B cell (primary cell): ENCODE measurements at regions of chr9 and their contacts with region 1.

Region 1: GRCh38 chr9:125843646-125844045 is 96.5 kb downstream of the PBX3 start:
- DNase-seq: no peak
- ATAC-seq: no peak
- H3K4me3 ChIP-seq: no peak overlapping the region
- H3K4me3 Mint-ChIP-seq: no peak overlapping the region
- H3K27ac ChIP-seq: no peak overlapping the region
- H3K27ac Mint-ChIP-seq: no peak overlapping the region
- H3K4me1 ChIP-seq: peaks cover 28 to 36% of the 10 kb centered on the region in 2 donors
- H3K4me1 Mint-ChIP-seq: peaks cover 53% of the 10 kb centered on the region
- H3K27me3 ChIP-seq: no peaks in the 10 kb centered on the region
- H3K27me3 Mint-ChIP-seq: no peaks in the 10 kb centered on the region
- CTCF ChIP-seq: no peak

Region 2: DNA sequence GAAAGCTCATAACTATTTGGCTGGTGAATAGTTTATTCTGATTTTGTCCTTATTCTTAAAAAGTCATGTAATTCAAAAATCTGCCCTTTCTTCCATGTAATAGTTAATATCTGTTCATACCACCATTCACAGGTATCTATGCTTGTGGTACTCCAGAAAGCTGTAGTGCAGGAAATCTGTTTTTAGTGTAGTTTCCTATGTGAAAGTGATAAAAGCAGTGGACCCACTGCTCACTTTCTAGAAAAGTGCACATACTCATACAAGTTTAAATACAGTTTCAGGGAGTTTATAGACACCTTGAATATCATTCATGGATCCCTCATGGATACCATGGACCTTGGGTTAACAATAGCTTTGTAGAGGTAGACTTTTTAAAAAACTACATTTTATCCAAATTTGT is 76.3 kb before region 1 on chr9:
- CTCF ChIA-PET with region 1: no interaction called
- POLR2A ChIA-PET with region 1: no interaction called
- intact Hi-C with region 1: loop called (anchors 5 kb)
- DNase-seq: no peak
- ATAC-seq: no peak
- H3K4me3 ChIP-seq: no peak overlapping the region
- H3K4me3 Mint-ChIP-seq: no peak overlapping the region
- H3K27ac ChIP-seq: peak overlapping the region in 1 of 2 donors; percentile 9
- H3K27ac Mint-ChIP-seq: no peak overlapping the region
- H3K4me1 ChIP-seq: peaks cover 10 to 12% of the 10 kb centered on the region in 2 donors
- H3K4me1 Mint-ChIP-seq: peaks cover 24% of the 10 kb centered on the region
- H3K27me3 ChIP-seq: no peaks in the 10 kb centered on the region
- H3K27me3 Mint-ChIP-seq: no peaks in the 10 kb centered on the region
- CTCF ChIP-seq: no peak

Region 3: GRCh38 chr9:125829743-125830142 is 13.9 kb before region 1 on chr9:
- CTCF ChIA-PET with region 1: interaction called, 5 read pairs
- POLR2A ChIA-PET with region 1: interaction called, 3 read pairs
- intact Hi-C with region 1: loop called (anchors 2 kb)
- DNase-seq: peak; percentile 79
- ATAC-seq: peak; percentile 94
- H3K4me3 ChIP-seq: peak overlapping the region; percentile 9 to 70 (median 55)
- H3K4me3 Mint-ChIP-seq: peak overlapping the region; percentile 92
- H3K27ac ChIP-seq: peak overlapping the region; percentile 5 to 86
- H3K27ac Mint-ChIP-seq: peak overlapping the region; percentile 94
- H3K4me1 ChIP-seq: peaks cover 2 to 12% of the 10 kb centered on the region in 2 donors
- H3K4me1 Mint-ChIP-seq: peaks cover 28% of the 10 kb centered on the region
- H3K27me3 ChIP-seq: no peaks in the 10 kb centered on the region
- H3K27me3 Mint-ChIP-seq: no peaks in the 10 kb centered on the region
- CTCF ChIP-seq: no peak

Region 4: GRCh38 chr9:125883565-125884217 is 40.0 kb after region 1 on chr9:
- CTCF ChIA-PET with region 1: no interaction called
- POLR2A ChIA-PET with region 1: no interaction called
- intact Hi-C with region 1: loop called (anchors 5 kb)
- DNase-seq: no peak
- ATAC-seq: no peak
- H3K4me3 ChIP-seq: no peak overlapping the region
- H3K4me3 Mint-ChIP-seq: no peak overlapping the region
- H3K27ac ChIP-seq: no peak overlapping the region
- H3K27ac Mint-ChIP-seq: peak overlapping the region; percentile 13
- H3K4me1 ChIP-seq: no peaks in the 10 kb centered on the region
- H3K4me1 Mint-ChIP-seq: peaks cover 13% of the 10 kb centered on the region
- H3K27me3 ChIP-seq: peaks cover 0 to 1% (median 0%) of the 10 kb centered on the region in 4 experiments
- H3K27me3 Mint-ChIP-seq: no peaks in the 10 kb centered on the region
- CTCF ChIP-seq: no peak